ENCODE measurements at regions of chr18 and their contacts with region 1.

Region 1: GRCh38 chr18:77650799-77651385 is 401.2 kb downstream of the GALR1 start:
- DNase-seq: peak; percentile 70
- H3K4me3 ChIP-seq: no peak overlapping the region
- H3K27ac ChIP-seq: no peak overlapping the region
- H3K4me1 ChIP-seq: no peaks in the 10 kb centered on the region
- H3K27me3 ChIP-seq: no peaks in the 10 kb centered on the region

Region 2: GRCh38 chr18:76791106-76791505 is 859.8 kb before region 1 on chr18:
- in situ Hi-C with region 1: loop called (anchors 25 kb)
- DNase-seq: no peak
- H3K4me3 ChIP-seq: no peak overlapping the region
- H3K27ac ChIP-seq: no peak overlapping the region
- H3K4me1 ChIP-seq: no peaks in the 10 kb centered on the region
- H3K27me3 ChIP-seq: no peaks in the 10 kb centered on the region

Region 3: GRCh38 chr18:76982841-76983587 is 667.9 kb before region 1 on chr18:
- in situ Hi-C with region 1: loop called (anchors 25 kb)
- DNase-seq: peak; percentile 72
- H3K4me3 ChIP-seq: no peak overlapping the region
- H3K27ac ChIP-seq: no peak overlapping the region
- H3K4me1 ChIP-seq: no peaks in the 10 kb centered on the region
- H3K27me3 ChIP-seq: no peaks in the 10 kb centered on the region

Region 4: GRCh38 chr18:77207540-77207939 is 443.4 kb before region 1 on chr18:
- in situ Hi-C with region 1: no loop called
- DNase-seq: peak; percentile 89
- H3K4me3 ChIP-seq: peak overlapping the region; percentile 20; the same call in 1 of the 2 replicates
- H3K27ac ChIP-seq: peak overlapping the region; percentile 81
- H3K4me1 ChIP-seq: peaks cover 38% of the 10 kb centered on the region
- H3K27me3 ChIP-seq: no peaks in the 10 kb centered on the region